ENCODE measurements at regions of chr7 and their contacts with region 1.

Region 1: DNA sequence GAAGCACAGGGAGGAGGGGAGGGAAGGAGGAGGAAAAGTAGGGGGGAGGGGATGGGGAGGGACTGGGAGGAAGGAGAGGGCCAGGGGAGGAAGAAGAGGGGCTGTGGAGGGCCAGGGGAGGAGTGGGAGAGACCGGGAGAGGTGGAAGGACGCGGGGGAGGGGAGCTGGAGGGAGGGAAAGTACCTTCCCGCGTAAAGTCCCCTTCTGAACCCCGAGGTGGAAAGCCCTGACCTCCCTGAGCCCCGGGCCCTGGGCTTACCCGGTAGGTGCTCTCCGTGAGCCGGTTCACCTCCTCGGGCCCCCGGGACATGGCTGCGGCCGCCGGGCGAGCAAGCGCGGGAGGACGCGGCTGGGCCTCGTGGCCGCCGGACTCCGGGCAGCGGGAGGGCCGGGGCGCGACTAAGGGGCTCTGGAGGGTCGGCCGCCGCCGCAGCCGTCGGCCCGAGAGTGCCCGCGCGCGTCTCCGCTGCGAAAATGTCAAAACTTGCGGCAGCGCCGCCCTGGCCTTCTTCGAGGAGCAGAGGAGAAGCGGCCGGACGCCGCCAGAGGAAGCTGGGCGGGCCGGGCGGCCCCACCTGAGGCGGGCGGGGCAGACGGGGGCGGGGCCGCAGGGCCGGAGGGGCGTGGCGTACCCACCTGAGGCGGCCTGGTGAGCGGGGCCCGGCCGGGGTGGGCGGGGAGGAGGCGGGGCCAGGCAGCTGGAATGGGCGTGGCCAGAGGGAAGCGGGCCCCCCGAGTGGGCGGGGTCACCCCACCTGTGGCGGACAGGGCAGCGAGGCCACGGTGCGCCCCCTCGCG is at the start of gene BAIAP2L1:
- DNase-seq: peak; percentile 76
- ATAC-seq: peak; percentile 93 to 98
- total RNA-seq, gene BAIAP2L1: 2.4 TPM

Region 2: GRCh38 chr7:97174303-97174702 is 1226.4 kb before region 1 on chr7:
- intact Hi-C with region 1: no loop called
- DNase-seq: no peak
- ATAC-seq: no peak

Region 3: DNA sequence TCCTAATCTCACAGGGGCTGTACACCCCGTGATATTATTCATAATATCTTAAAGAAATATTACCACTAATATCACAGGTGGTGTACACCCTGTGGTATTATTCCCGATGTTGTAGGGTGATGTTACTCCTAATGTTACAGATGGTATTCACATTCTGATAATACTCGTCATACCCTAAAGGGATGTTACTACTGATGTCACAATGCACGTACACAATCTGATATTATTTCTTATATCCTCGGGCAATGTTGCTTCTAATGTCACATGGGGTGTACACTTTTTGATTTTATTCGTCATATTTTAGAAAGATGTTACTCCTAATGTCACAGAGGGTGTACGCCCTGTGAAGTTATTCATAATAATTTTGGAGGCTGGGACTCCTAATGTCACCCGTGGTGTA is 438.8 kb before region 1 on chr7:
- intact Hi-C with region 1: no loop called
- DNase-seq: no peak
- ATAC-seq: no peak

Region 4: GRCh38 chr7:98294796-98295382 is 105.9 kb before region 1 on chr7:
- intact Hi-C with region 1: loop called in 1 of 2 experiments (anchors 2 kb)
- DNase-seq: peak; percentile 45
- ATAC-seq: peak; percentile 65 to 89